MCF 10A (cell line): ENCODE measurements at regions of chr12 and their contacts with region 1.

Region 1: GRCh38 chr12:63802012-63802608 is 22.4 kb downstream of the RXYLT1 start:
- DNase-seq: peak; percentile 23
- H3K4me3 Mint-ChIP-seq: no peak overlapping the region
- H3K27ac Mint-ChIP-seq: no peak overlapping the region
- H3K4me1 Mint-ChIP-seq: peaks cover 6% of the 10 kb centered on the region
- H3K27me3 Mint-ChIP-seq: no peaks in the 10 kb centered on the region
- CTCF ChIP-seq: peak; percentile 59

Region 2: GRCh38 chr12:63103494-63104131 is 698.5 kb before region 1 on chr12:
- CTCF ChIA-PET with region 1: interaction called, 6 read pairs
- POLR2A ChIA-PET with region 1: no interaction called
- intact Hi-C with region 1: loop called (anchors 2 kb)
- DNase-seq: peak; percentile 41
- H3K4me3 Mint-ChIP-seq: no peak overlapping the region
- H3K27ac Mint-ChIP-seq: no peak overlapping the region
- H3K4me1 Mint-ChIP-seq: no peaks in the 10 kb centered on the region
- H3K27me3 Mint-ChIP-seq: peaks cover 34% of the 10 kb centered on the region
- CTCF ChIP-seq: peak; percentile 82

Region 3: DNA sequence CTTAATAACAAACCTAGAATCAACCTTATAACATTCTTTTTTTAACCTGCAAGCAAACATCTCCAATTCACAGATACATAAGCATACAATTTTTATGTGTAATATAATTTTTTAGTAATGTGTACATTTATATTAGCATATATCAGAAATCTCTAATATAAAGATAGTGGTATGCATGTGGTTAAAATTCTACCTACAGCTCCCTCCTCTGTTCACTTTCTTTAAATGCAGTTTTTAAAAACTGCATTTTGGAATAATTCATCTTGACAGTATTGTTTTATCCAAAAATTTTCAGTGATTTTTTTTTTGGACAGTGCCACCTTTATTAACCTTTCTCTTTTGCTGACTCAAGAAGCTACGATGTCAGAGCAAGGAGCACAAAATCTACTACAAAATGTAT is 35.6 kb before region 1 on chr12:
- CTCF ChIA-PET with region 1: interaction called, 13 read pairs
- POLR2A ChIA-PET with region 1: no interaction called
- intact Hi-C with region 1: no loop called
- DNase-seq: no peak
- H3K4me3 Mint-ChIP-seq: no peak overlapping the region
- H3K27ac Mint-ChIP-seq: no peak overlapping the region
- H3K4me1 Mint-ChIP-seq: no peaks in the 10 kb centered on the region
- H3K27me3 Mint-ChIP-seq: peaks cover 86% of the 10 kb centered on the region
- CTCF ChIP-seq: peak; percentile 21

Region 4: DNA sequence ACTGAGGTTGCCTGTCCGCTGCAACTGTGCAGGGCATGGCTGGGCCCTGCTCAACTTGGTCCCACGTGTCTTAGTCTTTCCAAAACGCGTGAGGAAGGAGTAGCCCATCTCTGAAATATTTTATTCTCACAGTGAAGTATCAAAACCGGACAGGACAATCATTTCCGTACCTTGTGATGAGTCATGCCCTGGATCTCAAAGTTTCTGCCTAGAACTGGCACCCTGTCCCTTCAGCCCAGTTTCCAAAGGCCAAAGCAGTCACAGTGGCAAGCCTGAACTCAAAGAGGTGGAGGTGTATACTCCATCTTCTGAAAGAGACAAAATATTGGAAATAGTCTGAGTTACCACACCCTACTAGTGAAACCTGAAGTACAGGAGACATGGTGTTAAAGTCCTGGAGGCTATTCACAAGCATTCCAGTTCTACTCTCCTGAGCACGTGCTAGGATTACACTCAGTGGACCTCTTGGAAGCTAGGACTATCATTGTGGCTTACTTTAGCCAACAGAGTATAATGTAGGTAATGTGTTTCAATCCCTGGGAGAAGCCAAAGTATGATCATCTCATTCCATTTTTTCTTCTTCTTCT is 14.0 kb after region 1 on chr12:
- CTCF ChIA-PET with region 1: interaction called, 11 read pairs
- POLR2A ChIA-PET with region 1: interaction called, 3 read pairs
- intact Hi-C with region 1: no loop called
- DNase-seq: peak; percentile 24
- H3K4me3 Mint-ChIP-seq: no peak overlapping the region
- H3K27ac Mint-ChIP-seq: no peak overlapping the region
- H3K4me1 Mint-ChIP-seq: no peaks in the 10 kb centered on the region
- H3K27me3 Mint-ChIP-seq: no peaks in the 10 kb centered on the region
- CTCF ChIP-seq: no peak

Region 5: DNA sequence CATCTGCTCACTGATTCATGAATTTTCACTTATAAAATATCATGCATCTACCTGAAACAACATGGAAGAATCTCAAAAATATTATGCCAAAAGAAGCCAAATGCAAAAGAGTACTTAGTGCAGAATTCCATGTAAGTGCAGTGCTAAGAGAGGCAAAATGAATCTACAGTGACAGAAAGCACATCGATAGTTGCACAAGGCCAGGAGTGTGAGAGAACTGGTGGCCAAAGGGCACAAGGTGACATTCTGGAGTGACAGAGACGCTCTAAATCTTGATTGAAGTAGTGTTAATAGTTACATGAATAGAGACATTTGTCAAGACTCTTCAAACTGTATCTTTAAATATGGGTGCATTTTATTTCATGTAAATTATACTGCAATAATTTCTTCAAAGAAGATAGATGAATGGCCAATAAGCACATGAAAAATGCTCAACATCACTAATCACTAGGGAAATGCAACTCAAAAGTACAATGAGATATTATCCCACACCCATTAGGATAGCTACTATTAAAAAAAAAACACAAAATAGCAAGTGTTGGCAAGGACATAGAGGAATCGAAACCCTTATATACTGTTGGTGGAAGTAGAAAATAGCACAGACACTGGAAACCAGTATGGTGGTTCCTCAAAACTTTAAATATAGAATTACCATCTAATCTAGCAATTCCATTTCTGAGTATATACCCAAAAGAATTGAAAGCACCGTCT is 491.7 kb after region 1 on chr12:
- CTCF ChIA-PET with region 1: no interaction called
- POLR2A ChIA-PET with region 1: no interaction called
- intact Hi-C with region 1: no loop called
- DNase-seq: no peak
- H3K4me3 Mint-ChIP-seq: no peak overlapping the region
- H3K27ac Mint-ChIP-seq: no peak overlapping the region
- H3K4me1 Mint-ChIP-seq: no peaks in the 10 kb centered on the region
- H3K27me3 Mint-ChIP-seq: no peaks in the 10 kb centered on the region
- CTCF ChIP-seq: no peak